ENCODE measurements at regions of chr4 and their contacts with region 1.

Region 1: DNA sequence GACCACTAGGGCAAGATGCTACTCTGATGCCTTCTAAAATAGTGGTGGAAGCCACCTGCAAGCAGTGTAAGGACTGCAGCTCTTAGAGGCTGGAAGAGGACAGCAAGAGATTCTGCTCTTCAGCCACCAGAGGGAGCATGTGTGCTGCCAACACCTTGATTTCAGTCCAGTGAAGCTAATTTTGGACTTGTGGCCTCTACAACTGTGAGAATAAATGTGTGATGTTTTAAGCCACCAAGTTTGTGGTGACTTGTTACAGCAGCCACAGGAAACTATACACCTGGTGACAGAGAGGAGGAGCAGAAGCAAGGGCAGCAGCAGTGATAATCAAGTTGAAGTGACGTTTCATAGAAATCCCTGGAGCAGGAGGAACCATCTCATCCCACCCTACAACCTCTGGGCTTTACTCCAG is 55.9 kb downstream of the FGFBP1 start:
- DNase-seq: peak in 1 of 2 donors; percentile 47
- ATAC-seq: peak; percentile 61 to 91 (median 82)
- H3K4me3 ChIP-seq: no peak overlapping the region
- H3K27ac ChIP-seq: no peak overlapping the region
- H3K4me1 ChIP-seq: no peaks in the 10 kb centered on the region
- H3K27me3 ChIP-seq: peaks cover 0 to 4% (median 0%) of the 10 kb centered on the region in 7 donors
- CTCF ChIP-seq: peak; percentile 79 to 95 (median 90)

Region 2: DNA sequence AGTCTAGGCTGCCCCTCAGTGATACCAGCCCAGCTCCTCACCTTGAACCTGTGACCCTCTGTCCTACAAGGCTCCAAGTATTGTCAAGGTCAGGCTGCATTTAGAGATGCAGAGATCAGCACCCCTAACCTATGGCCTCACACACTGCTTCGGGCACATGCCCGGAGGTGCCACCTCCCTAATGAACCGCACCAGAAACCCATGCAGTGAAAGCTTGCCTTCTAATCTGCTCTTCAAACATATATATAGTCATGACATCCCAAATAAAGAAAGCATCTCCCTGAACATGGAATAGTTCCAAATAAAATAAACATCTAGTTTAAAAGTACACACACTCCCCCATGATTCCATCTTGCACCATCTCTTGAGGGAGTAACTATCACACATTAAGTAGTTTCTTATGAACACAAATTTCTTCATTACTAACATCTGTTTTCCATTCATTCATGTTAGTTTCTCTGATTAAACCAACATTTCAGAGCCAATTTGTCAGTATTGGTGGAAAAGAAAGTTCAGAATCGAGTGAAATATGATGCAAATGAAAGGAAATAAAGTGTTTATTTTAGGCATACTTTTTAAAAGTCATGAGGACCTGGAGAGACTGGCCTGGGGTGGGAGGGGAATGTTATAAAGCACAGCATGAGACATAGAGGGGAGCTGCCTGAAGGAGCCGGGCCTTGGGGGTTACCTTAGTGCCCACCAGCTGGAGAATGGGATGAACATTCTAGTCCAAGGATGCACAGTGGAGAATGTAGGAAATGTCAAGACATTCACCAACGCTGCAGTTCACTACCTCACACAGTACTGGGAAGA is 393.8 kb before region 1 on chr4:
- intact Hi-C with region 1: loop called in 1 of 10 experiments (anchors 10 kb)
- DNase-seq: no peak
- ATAC-seq: peak; percentile 47 to 90 (median 78)
- H3K4me3 ChIP-seq: no peak overlapping the region
- H3K27ac ChIP-seq: peak overlapping the region in 7 of 10 donors; percentile 20 to 63 (median 49)
- H3K4me1 ChIP-seq: peaks cover 0 to 12% (median 8%) of the 10 kb centered on the region in 9 donors
- H3K27me3 ChIP-seq: no peaks in the 10 kb centered on the region
- CTCF ChIP-seq: no peak

Region 3: GRCh38 chr4:15805583-15806517 is 76.8 kb before region 1 on chr4:
- intact Hi-C with region 1: loop called in 2 of 10 experiments (anchors 5 kb)
- DNase-seq: peak in 1 of 2 donors; percentile 30
- ATAC-seq: peak in 7 of 8 donors; percentile 15 to 78 (median 67)
- H3K4me3 ChIP-seq: no peak overlapping the region
- H3K27ac ChIP-seq: no peak overlapping the region
- H3K4me1 ChIP-seq: peaks cover 0 to 29% (median 3%) of the 10 kb centered on the region in 9 donors
- H3K27me3 ChIP-seq: no peaks in the 10 kb centered on the region
- CTCF ChIP-seq: peak; percentile 47 to 78 (median 72)

Region 4: GRCh38 chr4:15963001-15963451 is 80.3 kb after region 1 on chr4 and contains the start of gene FGFBP2:
- intact Hi-C with region 1: loop called in 5 of 10 experiments (anchors 2 to 5 kb)
- DNase-seq: peak; percentile 30 to 56
- ATAC-seq: peak; percentile 64 to 79 (median 72)
- H3K4me3 ChIP-seq: peak within 1 kb of the TSS in 1 of 10 donors; percentile 5
- H3K27ac ChIP-seq: no peak within 1 kb of the TSS
- H3K4me1 ChIP-seq: peaks cover 0 to 20% (median 8%) of the 10 kb centered on the region in 9 donors
- H3K27me3 ChIP-seq: no peaks in the 10 kb centered on the region
- CTCF ChIP-seq: peak in 7 of 9 donors; percentile 37 to 53 (median 45)
- total RNA-seq, gene FGFBP2: 0.32 to 15.8 (median 1.6) TPM

Region 5: DNA sequence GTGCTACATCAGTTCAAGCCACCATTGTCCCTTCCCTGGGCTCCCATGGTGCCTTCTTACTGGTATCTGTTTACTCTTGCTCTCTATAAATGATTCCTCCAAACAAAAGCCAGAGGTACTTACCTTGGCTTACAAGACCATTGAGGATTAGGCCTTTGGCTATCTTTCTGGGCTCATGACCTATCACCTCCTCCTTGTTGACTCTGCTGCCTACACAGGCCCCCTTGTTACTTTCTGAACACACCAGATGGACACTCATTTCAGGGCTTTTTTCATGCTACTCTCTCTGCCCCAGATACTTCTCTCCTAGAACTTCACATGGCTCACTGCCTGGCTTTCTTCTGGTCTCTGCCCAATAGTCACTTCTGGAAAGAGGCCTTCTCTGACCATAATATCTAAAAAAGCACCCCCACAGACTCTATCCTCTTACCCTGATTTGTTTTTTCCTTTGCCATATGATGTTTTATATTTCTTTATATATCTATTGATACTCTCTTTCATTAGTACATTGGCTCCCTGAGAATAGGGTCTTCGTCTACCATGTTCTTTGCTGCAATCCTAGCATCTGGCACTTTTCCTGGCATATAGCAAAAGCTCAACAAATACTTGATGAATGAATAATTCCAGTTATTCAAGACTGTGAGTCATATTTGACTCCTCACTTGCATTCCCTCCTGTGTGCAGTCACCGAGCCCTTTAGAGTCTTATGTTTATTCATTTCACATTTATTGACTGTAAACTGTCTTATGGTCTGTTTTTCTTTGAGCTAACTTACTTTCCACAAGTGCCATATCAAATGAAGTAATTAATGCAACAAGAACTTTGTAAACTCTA is 370.7 kb after region 1 on chr4:
- intact Hi-C with region 1: loop called in 1 of 10 experiments (anchors 10 kb)
- DNase-seq: no peak
- ATAC-seq: no peak
- H3K4me3 ChIP-seq: no peak overlapping the region
- H3K27ac ChIP-seq: no peak overlapping the region
- H3K4me1 ChIP-seq: peaks cover 0 to 7% (median 0%) of the 10 kb centered on the region in 9 donors
- H3K27me3 ChIP-seq: no peaks in the 10 kb centered on the region
- CTCF ChIP-seq: no peak